Activated naive CD4-positive, alpha-beta T cell treated with anti-CD3 and anti-CD28 coated beads, Interleukin-2, amount 10 ng/mL, durations not matched to agents 7 days and 5 days (primary cell): ENCODE measurements at regions of chr5 and their contacts with region 1.

Region 1: DNA sequence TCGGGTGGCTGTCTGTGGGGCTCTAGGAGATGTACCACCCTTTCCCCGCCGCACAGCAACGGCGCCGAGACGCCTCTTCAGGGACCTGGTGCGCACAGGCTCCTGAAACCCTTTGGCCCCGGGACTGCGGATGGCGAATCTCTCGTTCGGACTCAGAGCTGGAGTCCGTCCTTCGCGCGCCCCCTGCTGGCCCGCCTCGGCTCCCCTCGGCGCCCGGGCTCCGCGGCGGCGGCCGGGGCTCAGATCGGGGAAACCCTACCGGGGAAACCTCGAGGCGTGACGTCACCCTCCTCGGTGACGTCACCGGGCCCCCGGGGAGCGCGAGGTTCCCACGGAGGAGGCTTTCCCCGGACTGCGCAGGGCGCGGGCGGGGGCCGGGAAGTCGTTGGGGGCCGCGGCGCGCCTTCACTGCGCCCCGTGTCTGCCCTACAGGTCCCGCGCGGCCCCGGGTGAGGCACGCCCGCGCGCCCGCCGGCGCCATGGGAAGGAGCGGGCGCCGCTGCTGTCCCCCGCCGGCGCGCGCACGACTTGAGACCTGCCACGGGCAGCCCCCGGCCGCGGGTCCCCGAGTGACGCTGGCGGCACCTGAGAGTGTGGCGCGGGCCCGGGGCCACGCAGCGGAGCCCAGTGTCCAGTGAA is 7.9 kb downstream of the PRR7 start:
- DNase-seq: peak; percentile 92
- H3K4me3 Mint-ChIP-seq: peak overlapping the region; percentile 80
- H3K27ac Mint-ChIP-seq: peak overlapping the region; percentile 84
- H3K4me1 Mint-ChIP-seq: peaks cover 29% of the 10 kb centered on the region
- H3K27me3 Mint-ChIP-seq: peaks cover 44% of the 10 kb centered on the region

Region 2: GRCh38 chr5:177070536-177071191 is 383.9 kb before region 1 on chr5:
- CTCF ChIA-PET with region 1: no interaction called
- DNase-seq: no peak
- H3K4me3 Mint-ChIP-seq: no peak overlapping the region
- H3K27ac Mint-ChIP-seq: no peak overlapping the region
- H3K4me1 Mint-ChIP-seq: peaks cover 3% of the 10 kb centered on the region
- H3K27me3 Mint-ChIP-seq: no peaks in the 10 kb centered on the region

Region 3: GRCh38 chr5:177256296-177256695 is 198.2 kb before region 1 on chr5:
- CTCF ChIA-PET with region 1: no interaction called
- DNase-seq: no peak
- H3K4me3 Mint-ChIP-seq: no peak overlapping the region
- H3K27ac Mint-ChIP-seq: no peak overlapping the region
- H3K4me1 Mint-ChIP-seq: peaks cover 10% of the 10 kb centered on the region
- H3K27me3 Mint-ChIP-seq: no peaks in the 10 kb centered on the region

Region 4: DNA sequence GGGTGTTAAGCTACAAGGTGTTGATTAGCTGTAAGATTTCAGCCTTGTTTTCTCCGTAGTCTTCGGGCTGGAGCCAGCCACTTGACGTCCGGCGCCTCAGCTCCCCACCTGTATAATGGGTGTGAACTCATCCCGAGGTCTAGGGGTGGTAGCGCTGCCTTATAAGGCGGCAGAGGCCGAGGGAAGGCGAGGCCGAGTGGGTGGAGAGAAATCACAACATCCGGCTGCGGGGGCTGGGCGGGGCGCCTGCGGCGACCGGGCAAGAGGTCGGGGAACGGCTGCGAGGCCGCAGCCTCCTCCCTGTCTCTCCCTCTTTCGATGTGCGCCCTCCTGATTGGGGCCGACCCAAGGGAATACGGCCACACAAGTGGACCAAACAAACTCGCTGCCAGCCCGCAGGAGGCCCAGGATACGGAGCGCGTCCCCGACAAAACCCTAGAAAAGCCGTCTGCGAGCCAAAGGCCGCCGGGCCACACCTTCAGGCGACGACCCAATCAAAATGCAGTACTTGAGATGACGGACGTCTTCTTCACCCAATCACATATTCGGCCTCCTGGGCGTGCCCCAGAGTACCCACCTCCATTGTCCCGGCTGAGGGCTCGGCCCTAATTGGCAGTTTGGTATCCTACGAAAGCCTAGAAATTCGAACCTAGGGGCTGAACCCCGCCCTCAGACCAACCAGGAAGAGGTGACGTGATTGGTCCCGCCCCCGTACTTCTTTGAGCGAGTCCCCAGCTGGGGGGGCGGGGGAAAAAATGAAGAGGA is 28.5 kb before region 1 on chr5:
- CTCF ChIA-PET with region 1: interaction called, 89 read pairs
- DNase-seq: peak; percentile 100
- H3K4me3 Mint-ChIP-seq: peak overlapping the region; percentile 86
- H3K27ac Mint-ChIP-seq: peak overlapping the region; percentile 97
- H3K4me1 Mint-ChIP-seq: peaks cover 50% of the 10 kb centered on the region
- H3K27me3 Mint-ChIP-seq: no peaks in the 10 kb centered on the region